ENCODE measurements at regions of chr4 and their contacts with region 1.

Region 1: DNA sequence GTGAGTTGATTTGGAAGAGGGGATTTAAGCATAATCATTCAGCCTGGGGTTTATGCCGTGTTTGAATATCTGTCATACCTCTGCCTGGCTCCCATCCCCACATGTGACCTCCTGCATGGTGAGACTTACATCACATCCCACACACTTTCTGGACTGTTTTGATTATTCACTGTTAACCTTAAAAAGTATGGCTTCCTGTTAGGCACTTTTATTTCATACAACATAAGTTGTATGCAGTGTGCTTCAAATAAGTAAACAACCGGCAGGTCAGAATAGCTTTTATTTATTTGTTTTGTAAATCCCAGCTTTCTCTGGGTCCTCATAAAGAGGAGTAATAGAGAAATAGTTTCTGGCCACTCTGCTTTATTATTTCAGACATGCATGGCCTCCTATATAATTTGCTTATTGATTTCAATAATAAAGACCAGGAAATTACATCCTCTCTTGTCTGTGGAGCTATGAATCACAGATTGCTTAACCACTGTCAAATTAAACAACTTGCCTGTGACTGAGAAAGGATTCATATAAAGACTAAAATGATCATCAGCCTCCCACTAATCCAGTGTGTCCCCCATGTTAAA is 376.8 kb upstream of the ZFP42 start:
- DNase-seq: no peak
- H3K4me3 ChIP-seq: no peak overlapping the region
- H3K27ac ChIP-seq: no peak overlapping the region
- H3K4me1 ChIP-seq: no peaks in the 10 kb centered on the region
- H3K27me3 ChIP-seq: no peaks in the 10 kb centered on the region
- CTCF ChIP-seq: no peak

Region 2: DNA sequence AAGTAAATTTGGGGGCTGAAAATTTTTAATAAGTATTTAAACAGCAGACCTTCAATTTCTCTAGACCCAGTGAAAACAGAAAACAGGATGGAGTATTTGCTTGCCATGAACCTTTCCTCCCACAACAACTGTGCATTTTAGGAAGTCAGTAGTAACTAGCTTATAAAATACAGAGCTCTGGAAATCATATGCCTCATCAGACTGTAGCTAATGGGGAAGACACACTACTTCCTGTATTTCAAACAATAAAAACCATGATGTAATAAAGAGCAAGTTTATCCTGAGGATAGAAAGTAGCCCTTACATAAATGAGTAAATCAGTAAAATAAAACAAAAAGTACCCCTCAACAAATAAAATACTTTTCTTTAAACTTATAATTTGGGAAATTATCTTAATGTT is 96.7 kb after region 1 on chr4:
- CTCF ChIA-PET with region 1: no interaction called
- POLR2A ChIA-PET with region 1: no interaction called
- intact Hi-C with region 1: loop called (anchors 10 kb)
- DNase-seq: no peak
- H3K4me3 ChIP-seq: no peak overlapping the region
- H3K27ac ChIP-seq: no peak overlapping the region
- H3K4me1 ChIP-seq: no peaks in the 10 kb centered on the region
- H3K27me3 ChIP-seq: no peaks in the 10 kb centered on the region
- CTCF ChIP-seq: no peak

Measured in PC-9 (cell line).